Mammary epithelial cell (primary cell): ENCODE measurements at regions of chr14 and their contacts with region 1.

Region 1: GRCh38 chr14:76203086-76204001 is 51.6 kb downstream of the GPATCH2L start:
- DNase-seq: peak; percentile 85
- H3K4me3 ChIP-seq: no peak overlapping the region
- H3K27ac ChIP-seq: peak overlapping the region; percentile 47
- H3K4me1 ChIP-seq: peaks cover 28% of the 10 kb centered on the region
- H3K27me3 ChIP-seq: no peaks in the 10 kb centered on the region
- CTCF ChIP-seq: no peak

Region 2: DNA sequence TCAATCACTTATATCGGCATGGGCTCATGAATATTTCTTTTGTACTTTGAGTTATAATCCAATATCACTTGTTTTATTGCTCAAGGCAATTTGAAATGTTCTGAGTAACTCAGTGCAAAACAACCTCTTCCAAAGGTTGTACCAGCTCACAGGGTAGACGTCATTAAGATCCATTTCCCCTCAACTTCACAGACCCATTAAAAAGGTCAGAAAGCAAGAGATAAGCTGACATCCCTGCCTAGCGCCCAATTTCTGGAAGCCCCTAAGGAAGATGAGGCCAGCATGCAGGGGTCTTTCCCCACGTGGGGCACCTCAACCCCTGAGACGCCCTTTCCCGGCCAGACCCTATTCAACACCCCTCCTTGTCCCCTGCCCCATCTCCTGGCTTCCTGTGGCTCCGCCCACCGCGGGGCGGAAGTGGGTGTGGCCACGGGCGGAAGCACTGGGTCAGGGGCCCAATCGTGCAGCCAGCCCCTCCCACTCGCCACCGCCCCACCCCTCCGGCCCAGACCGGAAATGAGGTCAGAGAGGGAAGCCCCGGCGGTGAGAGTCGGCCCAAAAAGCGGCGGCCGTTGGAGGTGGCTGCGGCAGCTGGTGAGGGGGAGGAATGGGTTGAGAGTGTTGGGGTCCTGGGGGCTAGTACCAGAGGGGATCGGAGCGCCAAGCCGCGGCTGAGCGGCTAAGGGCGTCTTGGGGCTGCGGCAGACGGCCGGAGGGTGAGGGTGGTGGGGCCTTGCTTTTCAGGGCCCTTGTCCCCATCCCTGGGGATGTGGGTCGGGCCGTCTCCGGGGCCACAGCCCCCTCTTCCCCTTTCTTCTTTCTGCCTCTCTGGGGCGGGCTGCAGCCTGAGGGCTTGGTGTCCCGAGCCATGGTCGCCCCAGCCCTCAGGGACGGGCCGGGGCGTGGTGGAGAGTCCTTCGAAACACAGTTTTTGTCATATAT is 51.7 kb before region 1 on chr14 and contains the start of gene GPATCH2L:
- CTCF ChIA-PET with region 1: no interaction called
- dilution Hi-C with region 1: no loop called
- in situ Hi-C with region 1: no loop called
- intact Hi-C with region 1: loop called (anchors 5 kb)
- DNase-seq: peak; percentile 88
- H3K4me3 ChIP-seq: peak within 1 kb of the TSS; percentile 80 to 84 (median 82)
- H3K27ac ChIP-seq: peak within 1 kb of the TSS; percentile 86
- H3K4me1 ChIP-seq: peaks cover 28% of the 10 kb centered on the region
- H3K27me3 ChIP-seq: no peaks in the 10 kb centered on the region
- CTCF ChIP-seq: no peak
- total RNA-seq, gene GPATCH2L: 65.1 to 69.5 TPM

Region 3: GRCh38 chr14:76257111-76257803 is 53.9 kb after region 1 on chr14:
- CTCF ChIA-PET with region 1: no interaction called
- dilution Hi-C with region 1: no loop called
- in situ Hi-C with region 1: no loop called
- intact Hi-C with region 1: no loop called
- DNase-seq: no peak
- H3K4me3 ChIP-seq: no peak overlapping the region
- H3K27ac ChIP-seq: no peak overlapping the region
- H3K4me1 ChIP-seq: no peaks in the 10 kb centered on the region
- H3K27me3 ChIP-seq: no peaks in the 10 kb centered on the region
- CTCF ChIP-seq: no peak

Region 4: GRCh38 chr14:76514613-76515012 is 311.3 kb after region 1 on chr14:
- CTCF ChIA-PET with region 1: no interaction called
- dilution Hi-C with region 1: no loop called
- in situ Hi-C with region 1: no loop called
- intact Hi-C with region 1: no loop called
- DNase-seq: peak; percentile 46
- H3K4me3 ChIP-seq: no peak overlapping the region
- H3K27ac ChIP-seq: no peak overlapping the region
- H3K4me1 ChIP-seq: peaks cover 11% of the 10 kb centered on the region
- H3K27me3 ChIP-seq: no peaks in the 10 kb centered on the region
- CTCF ChIP-seq: peak; percentile 62 to 74